A549 (cell line): ENCODE measurements at regions of chr16 and their contacts with region 1.

Region 1: DNA sequence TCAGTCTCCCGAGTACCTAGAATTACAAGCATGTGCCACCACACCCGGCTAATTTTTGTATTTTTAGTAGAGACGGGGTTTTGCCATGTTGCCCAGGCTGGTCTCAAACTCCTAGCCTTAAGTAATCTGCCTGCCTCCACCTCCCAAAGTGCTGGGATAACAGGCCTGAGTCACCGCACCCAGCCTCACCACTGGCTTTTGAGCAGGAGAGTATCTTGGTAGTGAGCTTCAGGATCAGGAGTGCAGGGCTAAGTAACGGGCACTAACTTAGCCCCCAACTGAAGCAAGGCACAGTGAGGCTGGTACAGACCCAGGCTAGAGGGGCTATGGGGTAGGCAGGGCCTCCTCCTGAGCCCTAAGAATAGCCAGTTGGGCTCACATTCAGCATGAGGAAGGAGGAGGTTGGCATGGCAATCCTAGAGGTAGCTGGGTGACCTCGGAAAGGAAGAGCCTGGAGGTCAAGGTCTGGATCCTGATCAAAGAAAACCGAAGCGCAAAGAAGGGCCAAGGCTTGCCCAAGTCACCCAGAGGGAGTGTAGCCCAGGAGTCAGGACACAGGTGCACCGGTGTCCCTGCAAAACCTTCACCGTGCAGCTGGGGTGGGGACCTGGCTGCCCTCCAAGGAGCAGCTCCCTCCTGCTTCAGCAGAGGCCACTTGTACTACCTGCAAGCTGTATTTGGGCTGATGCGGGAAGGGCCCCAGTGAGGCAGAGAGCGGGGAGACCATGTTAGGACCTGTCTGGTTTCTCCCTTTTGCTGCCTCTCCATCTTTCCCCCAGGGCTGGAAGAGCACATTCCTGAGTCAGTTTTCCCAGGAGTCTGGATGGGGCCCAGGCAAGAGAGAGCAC is 1.3 kb upstream of the ADGRG5 start:
- DNase-seq: no peak
- ATAC-seq: no peak; a peak in 1 of 6 replicates
- H3K4me3 ChIP-seq: no peak overlapping the region
- H3K27ac ChIP-seq: no peak overlapping the region
- H3K4me1 ChIP-seq: peaks cover 4% of the 10 kb centered on the region; the same call in 2 of the 3 replicates
- CTCF ChIP-seq: no peak
- EP300 ChIP-seq: no peak
- POLR2A ChIP-seq: no peak
- RAD21 ChIP-seq: no peak

Region 2: GRCh38 chr16:57409870-57410585 is 131.1 kb before region 1 on chr16:
- CTCF ChIA-PET with region 1: no interaction called
- POLR2A ChIA-PET with region 1: no interaction called
- DNase-seq: no peak
- ATAC-seq: no peak
- H3K4me3 ChIP-seq: no peak overlapping the region
- H3K27ac ChIP-seq: no peak overlapping the region
- H3K4me1 ChIP-seq: no peaks in the 10 kb centered on the region
- CTCF ChIP-seq: no peak
- EP300 ChIP-seq: no peak
- POLR2A ChIP-seq: no peak
- RAD21 ChIP-seq: no peak

Region 3: GRCh38 chr16:57555831-57556230 is 14.7 kb after region 1 on chr16:
- CTCF ChIA-PET with region 1: interaction called, 12 read pairs
- POLR2A ChIA-PET with region 1: no interaction called
- DNase-seq: no peak
- ATAC-seq: no peak
- H3K4me3 ChIP-seq: no peak overlapping the region
- H3K27ac ChIP-seq: no peak overlapping the region
- H3K4me1 ChIP-seq: no peaks in the 10 kb centered on the region
- CTCF ChIP-seq: no peak
- EP300 ChIP-seq: no peak
- POLR2A ChIP-seq: no peak
- RAD21 ChIP-seq: no peak